CD8-positive, alpha-beta T cell (primary cell): ENCODE measurements at regions of chr12 and their contacts with region 1.

Region 1: GRCh38 chr12:14769969-14770495 is 33.2 kb downstream of the WBP11 start:
- DNase-seq: peak; percentile 69 to 97 (median 86)
- ATAC-seq: peak; percentile 51
- H3K4me3 ChIP-seq: peak overlapping the region; percentile 81 to 91
- H3K4me3 Mint-ChIP-seq: peak overlapping the region; percentile 99
- H3K27ac ChIP-seq: peak overlapping the region; percentile 95 to 99
- H3K27ac Mint-ChIP-seq: peak overlapping the region; percentile 99
- H3K4me1 ChIP-seq: peaks cover 35% of the 10 kb centered on the region
- H3K4me1 Mint-ChIP-seq: peaks cover 61% of the 10 kb centered on the region
- H3K27me3 ChIP-seq: no peaks in the 10 kb centered on the region
- H3K27me3 Mint-ChIP-seq: no peaks in the 10 kb centered on the region
- CTCF ChIP-seq: peak; percentile 79

Region 2: GRCh38 chr12:14257734-14258574 is 512.1 kb before region 1 on chr12:
- CTCF ChIA-PET with region 1: no interaction called
- POLR2A ChIA-PET with region 1: no interaction called
- intact Hi-C with region 1: loop called (anchors 1 to 5 kb)
- DNase-seq: peak; percentile 60 to 91 (median 84)
- ATAC-seq: peak; percentile 45
- H3K4me3 ChIP-seq: peak overlapping the region in 1 of 2 experiments; percentile 17
- H3K4me3 Mint-ChIP-seq: peak overlapping the region; percentile 73
- H3K27ac ChIP-seq: peak overlapping the region; percentile 72 to 87
- H3K27ac Mint-ChIP-seq: peak overlapping the region; percentile 99
- H3K4me1 ChIP-seq: peaks cover 39% of the 10 kb centered on the region
- H3K4me1 Mint-ChIP-seq: peaks cover 55% of the 10 kb centered on the region
- H3K27me3 ChIP-seq: no peaks in the 10 kb centered on the region
- H3K27me3 Mint-ChIP-seq: no peaks in the 10 kb centered on the region
- CTCF ChIP-seq: no peak

Region 3: GRCh38 chr12:14314801-14315200 is 455.2 kb before region 1 on chr12:
- CTCF ChIA-PET with region 1: no interaction called
- POLR2A ChIA-PET with region 1: no interaction called
- intact Hi-C with region 1: no loop called
- DNase-seq: no peak
- ATAC-seq: no peak
- H3K4me3 ChIP-seq: no peak overlapping the region
- H3K4me3 Mint-ChIP-seq: no peak overlapping the region
- H3K27ac ChIP-seq: no peak overlapping the region
- H3K27ac Mint-ChIP-seq: no peak overlapping the region
- H3K4me1 ChIP-seq: no peaks in the 10 kb centered on the region
- H3K4me1 Mint-ChIP-seq: no peaks in the 10 kb centered on the region
- H3K27me3 ChIP-seq: no peaks in the 10 kb centered on the region
- H3K27me3 Mint-ChIP-seq: no peaks in the 10 kb centered on the region
- CTCF ChIP-seq: no peak

Region 4: DNA sequence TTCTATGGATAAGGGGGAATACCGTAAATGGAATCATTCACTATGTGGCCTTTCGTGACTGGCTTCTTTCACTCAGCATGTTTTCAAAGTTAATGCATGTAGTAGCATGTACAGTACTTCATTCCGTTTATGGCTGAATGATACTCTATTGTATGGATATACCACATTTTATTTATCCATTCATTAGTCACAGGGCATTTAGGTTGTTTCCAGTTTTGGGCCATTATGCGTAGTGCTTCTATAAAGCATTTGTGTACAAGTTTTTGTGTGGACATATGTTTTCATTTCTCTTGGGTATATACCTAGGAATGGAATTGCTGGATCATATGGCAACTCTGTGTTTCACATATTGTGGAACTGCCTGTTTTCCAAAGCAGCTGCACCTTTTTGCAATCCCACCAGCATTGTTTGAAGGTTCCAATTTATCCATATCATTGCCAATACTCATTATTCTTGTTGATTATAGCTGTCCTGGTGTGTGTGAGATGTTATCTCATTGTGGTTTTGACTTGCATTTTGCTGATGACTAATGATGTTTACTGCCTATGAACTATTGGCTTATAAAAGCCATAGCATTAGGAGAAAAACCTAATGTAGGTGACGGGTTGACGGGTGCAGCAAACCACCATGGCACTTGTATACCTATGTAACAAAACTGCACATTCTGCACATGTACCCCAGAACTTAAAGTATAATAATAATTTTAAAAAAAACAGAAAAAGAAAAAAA is 359.0 kb before region 1 on chr12:
- CTCF ChIA-PET with region 1: no interaction called
- POLR2A ChIA-PET with region 1: interaction called, 3 read pairs
- intact Hi-C with region 1: loop called in 1 of 2 experiments (anchors 5 kb)
- DNase-seq: peak in 5 of 9 experiments; percentile 22 to 81 (median 50)
- ATAC-seq: peak; percentile 78
- H3K4me3 ChIP-seq: no peak overlapping the region
- H3K4me3 Mint-ChIP-seq: peak overlapping the region; percentile 9
- H3K27ac ChIP-seq: peak overlapping the region in 1 of 2 experiments; percentile 62
- H3K27ac Mint-ChIP-seq: peak overlapping the region; percentile 39
- H3K4me1 ChIP-seq: peaks cover 79% of the 10 kb centered on the region
- H3K4me1 Mint-ChIP-seq: peaks cover 68% of the 10 kb centered on the region
- H3K27me3 ChIP-seq: no peaks in the 10 kb centered on the region
- H3K27me3 Mint-ChIP-seq: no peaks in the 10 kb centered on the region
- CTCF ChIP-seq: no peak

Region 5: DNA sequence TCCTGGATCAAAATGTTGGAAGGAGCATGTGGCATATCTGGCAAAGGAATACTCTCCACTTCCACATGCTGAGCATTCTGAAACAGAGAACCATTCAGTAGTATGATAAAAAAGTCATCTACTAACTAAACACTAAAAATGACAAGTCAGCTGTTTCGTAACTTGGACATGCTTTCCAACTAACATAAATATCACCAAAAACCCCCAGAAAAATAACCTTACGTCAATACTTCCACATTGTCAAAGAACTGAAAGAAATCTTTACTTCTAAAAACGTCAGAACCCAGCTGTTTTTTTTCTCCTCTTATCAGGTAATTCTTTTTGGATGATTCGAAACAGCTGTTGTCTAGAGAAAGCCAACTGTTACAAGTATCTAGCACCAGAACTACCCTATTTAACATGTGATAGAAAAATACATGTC is 25.0 kb after region 1 on chr12:
- CTCF ChIA-PET with region 1: interaction called, 10 read pairs
- POLR2A ChIA-PET with region 1: interaction called, 184 read pairs
- intact Hi-C with region 1: loop called in 1 of 2 experiments (anchors 1 kb)
- DNase-seq: no peak
- ATAC-seq: no peak
- H3K4me3 ChIP-seq: no peak overlapping the region
- H3K4me3 Mint-ChIP-seq: no peak overlapping the region
- H3K27ac ChIP-seq: no peak overlapping the region
- H3K27ac Mint-ChIP-seq: no peak overlapping the region
- H3K4me1 ChIP-seq: no peaks in the 10 kb centered on the region
- H3K4me1 Mint-ChIP-seq: peaks cover 4% of the 10 kb centered on the region
- H3K27me3 ChIP-seq: no peaks in the 10 kb centered on the region
- H3K27me3 Mint-ChIP-seq: no peaks in the 10 kb centered on the region
- CTCF ChIP-seq: no peak

Region 6: GRCh38 chr12:14845350-14845750 is 75.3 kb after region 1 on chr12:
- CTCF ChIA-PET with region 1: interaction called, 12 read pairs
- POLR2A ChIA-PET with region 1: no interaction called
- intact Hi-C with region 1: no loop called
- DNase-seq: peak; percentile 7 to 73 (median 39)
- ATAC-seq: peak; percentile 71
- H3K4me3 ChIP-seq: no peak overlapping the region
- H3K4me3 Mint-ChIP-seq: no peak overlapping the region
- H3K27ac ChIP-seq: no peak overlapping the region
- H3K27ac Mint-ChIP-seq: no peak overlapping the region
- H3K4me1 ChIP-seq: peaks cover 9% of the 10 kb centered on the region
- H3K4me1 Mint-ChIP-seq: peaks cover 8% of the 10 kb centered on the region
- H3K27me3 ChIP-seq: no peaks in the 10 kb centered on the region
- H3K27me3 Mint-ChIP-seq: no peaks in the 10 kb centered on the region
- CTCF ChIP-seq: peak; percentile 88

Region 7: GRCh38 chr12:14995583-14996425 is 225.8 kb after region 1 on chr12:
- CTCF ChIA-PET with region 1: interaction called, 4 read pairs
- POLR2A ChIA-PET with region 1: interaction called, 19 read pairs
- intact Hi-C with region 1: loop called in 1 of 2 experiments (anchors 5 kb)
- DNase-seq: peak in 2 of 9 experiments; percentile 78 to 85
- ATAC-seq: peak; percentile 70
- H3K4me3 ChIP-seq: no peak overlapping the region
- H3K4me3 Mint-ChIP-seq: peak overlapping the region; percentile 20
- H3K27ac ChIP-seq: no peak overlapping the region
- H3K27ac Mint-ChIP-seq: peak overlapping the region; percentile 63
- H3K4me1 ChIP-seq: peaks cover 29% of the 10 kb centered on the region
- H3K4me1 Mint-ChIP-seq: peaks cover 31% of the 10 kb centered on the region
- H3K27me3 ChIP-seq: no peaks in the 10 kb centered on the region
- H3K27me3 Mint-ChIP-seq: peaks cover 2% of the 10 kb centered on the region
- CTCF ChIP-seq: peak; percentile 75